ENCODE measurements at regions of chr10 and their contacts with region 1.

Region 1: DNA sequence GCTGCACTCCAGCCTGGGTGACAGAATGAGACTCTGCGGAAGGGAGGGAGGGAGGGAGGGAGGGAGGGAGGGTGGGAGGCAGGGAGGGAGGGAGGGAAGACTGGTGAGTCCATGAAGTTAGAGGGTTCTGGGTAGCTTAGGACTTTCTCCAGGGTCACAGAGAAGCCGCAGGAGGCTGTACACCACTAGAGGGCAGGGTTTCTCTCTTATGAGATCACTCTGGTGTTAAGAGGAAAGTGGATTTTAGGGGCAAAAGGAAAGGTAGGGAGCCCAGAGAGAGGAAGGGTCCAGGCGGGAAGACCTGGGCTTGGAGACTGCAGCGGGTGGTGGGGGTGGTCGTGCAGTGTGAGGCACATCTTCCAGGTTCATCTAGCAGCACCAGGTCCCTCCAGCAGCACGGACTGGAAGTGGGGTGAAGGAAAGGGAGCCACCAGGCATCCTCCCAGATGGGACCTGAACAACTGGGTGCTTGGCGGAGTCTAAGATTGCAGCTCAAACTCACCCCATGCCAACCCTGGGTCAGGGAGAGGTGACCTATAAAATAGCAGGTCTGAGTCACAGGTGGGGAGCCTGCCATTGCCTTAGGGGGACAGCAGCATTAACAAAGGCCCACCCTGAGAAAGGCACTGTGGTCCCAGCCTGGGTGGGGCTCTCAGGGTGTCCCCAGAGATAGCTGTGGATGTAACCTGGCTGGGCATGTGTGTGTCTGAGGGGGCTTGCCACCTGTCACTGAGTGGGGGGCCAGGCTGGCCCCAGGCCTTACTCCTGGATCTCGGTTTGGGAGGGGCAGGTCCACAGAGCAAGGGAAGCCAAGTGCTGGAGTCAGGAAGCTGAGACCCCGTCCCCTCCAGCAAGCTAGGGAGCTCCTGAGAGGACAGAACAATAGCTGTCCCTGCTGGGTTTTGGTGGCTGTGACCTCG is 48.5 kb upstream of the SLC29A3 start:
- DNase-seq: peak; percentile 54
- ATAC-seq: peak; percentile 25 to 38

Region 2: GRCh38 chr10:71234970-71235685 is 35.4 kb before region 1 on chr10:
- intact Hi-C with region 1: loop called in 1 of 2 experiments (anchors 5 kb)
- DNase-seq: peak; percentile 86
- ATAC-seq: peak; percentile 62 to 78

Region 3: DNA sequence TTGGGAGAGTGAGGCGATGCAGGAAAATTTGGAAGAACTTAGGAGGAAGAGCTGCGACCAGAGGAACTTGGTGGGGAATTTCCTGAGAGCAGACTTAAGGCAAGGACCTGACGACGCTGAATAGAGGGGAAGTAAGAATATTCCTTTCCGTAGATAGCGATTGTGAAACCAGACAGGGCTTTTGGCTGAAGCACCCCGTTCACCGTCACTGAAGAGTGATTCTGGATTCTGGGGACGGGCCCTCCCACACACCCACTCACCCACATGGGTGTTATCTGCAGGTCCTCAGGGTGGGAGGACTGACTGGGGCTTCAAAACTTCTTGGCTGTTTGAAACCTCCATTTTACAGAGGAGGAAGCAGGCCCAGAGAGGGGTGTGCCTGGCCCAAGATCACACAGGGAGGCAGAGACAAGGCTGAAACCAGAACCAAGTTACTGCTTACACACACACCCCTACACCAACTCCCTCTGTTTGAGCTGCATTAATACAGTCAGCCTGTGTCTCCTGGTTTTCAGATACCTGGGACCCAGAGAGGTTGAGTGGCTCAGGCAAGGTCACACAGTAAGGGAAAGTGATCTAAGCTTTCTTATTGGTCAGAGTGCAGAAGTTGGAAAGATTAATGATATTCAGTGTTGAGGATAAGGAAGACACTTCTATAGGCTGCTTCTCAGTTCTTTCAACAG is 88.9 kb after region 1 on chr10:
- intact Hi-C with region 1: no loop called
- DNase-seq: peak; percentile 64
- ATAC-seq: peak; percentile 75 to 80

Region 4: DNA sequence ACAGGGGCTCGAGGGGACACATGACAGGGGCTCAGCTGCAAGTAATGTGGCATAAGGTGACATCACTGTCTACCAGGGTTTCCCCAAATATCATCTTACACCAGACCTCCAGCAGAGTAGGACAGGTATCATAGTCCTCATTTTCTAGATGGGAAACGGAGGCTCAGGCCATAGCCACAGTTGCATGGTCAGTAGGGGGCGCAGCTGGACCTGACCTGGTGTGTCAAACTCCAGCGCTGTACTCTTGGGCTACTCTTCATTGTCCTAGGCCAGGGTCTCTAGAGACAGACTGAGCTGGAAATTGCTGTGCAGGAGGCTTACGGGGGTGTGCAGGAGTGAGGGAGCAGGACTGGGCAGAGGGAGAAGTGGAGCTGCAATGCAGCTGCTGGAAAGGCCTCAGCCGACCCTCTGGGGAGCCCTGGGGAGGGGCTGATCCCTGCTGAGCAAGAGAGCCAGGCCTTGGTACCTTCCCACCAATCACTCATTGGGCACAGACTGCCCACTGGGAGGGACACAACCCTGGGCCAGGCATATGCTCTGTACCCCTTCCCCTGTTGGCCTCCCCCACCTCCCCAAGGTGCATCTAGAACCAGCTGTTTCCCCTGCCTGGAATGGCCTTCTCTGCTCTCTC is 216.0 kb after region 1 on chr10:
- intact Hi-C with region 1: no loop called
- DNase-seq: peak; percentile 51
- ATAC-seq: peak; percentile 50 to 52

Region 5: GRCh38 chr10:71860243-71861029 is 589.9 kb after region 1 on chr10:
- intact Hi-C with region 1: no loop called
- DNase-seq: peak; percentile 96
- ATAC-seq: peak; percentile 98 to 99

Region 6: GRCh38 chr10:71999360-72000072 is 729.0 kb after region 1 on chr10:
- intact Hi-C with region 1: no loop called
- DNase-seq: peak; percentile 87
- ATAC-seq: peak; percentile 84 to 87

Measured in left cardiac atrium (tissue), 4 donors.